Panc1 (cell line): ENCODE measurements at regions of chr9 and their contacts with region 1.

Region 1: DNA sequence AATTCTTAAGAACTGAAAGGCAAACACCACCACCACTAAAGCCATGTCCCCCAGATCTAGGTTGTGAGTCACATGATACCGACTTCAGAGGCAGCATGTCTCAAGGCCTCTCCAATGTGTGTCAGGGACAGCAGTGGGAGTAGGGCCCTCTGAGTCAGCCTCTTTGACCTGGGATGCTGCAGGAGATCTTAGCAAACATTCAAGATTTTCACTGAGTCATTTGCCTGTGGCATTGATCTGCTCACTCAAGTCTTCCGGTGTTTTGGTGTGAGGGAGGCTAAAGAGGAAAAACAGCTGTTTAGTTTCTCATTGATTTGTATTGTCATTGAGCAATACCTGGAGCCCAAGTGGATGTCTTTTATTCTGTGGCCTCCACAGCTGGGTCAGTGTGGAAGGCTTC is 36.1 kb downstream of the TMC1 start:
- DNase-seq: peak; percentile 85
- ATAC-seq: peak; percentile 98
- H3K4me3 ChIP-seq: no peak overlapping the region
- H3K27ac ChIP-seq: peak overlapping the region; percentile 94
- H3K4me1 ChIP-seq: peaks cover 32% of the 10 kb centered on the region
- H3K27me3 ChIP-seq: no peaks in the 10 kb centered on the region
- CTCF ChIP-seq: no peak

Region 2: DNA sequence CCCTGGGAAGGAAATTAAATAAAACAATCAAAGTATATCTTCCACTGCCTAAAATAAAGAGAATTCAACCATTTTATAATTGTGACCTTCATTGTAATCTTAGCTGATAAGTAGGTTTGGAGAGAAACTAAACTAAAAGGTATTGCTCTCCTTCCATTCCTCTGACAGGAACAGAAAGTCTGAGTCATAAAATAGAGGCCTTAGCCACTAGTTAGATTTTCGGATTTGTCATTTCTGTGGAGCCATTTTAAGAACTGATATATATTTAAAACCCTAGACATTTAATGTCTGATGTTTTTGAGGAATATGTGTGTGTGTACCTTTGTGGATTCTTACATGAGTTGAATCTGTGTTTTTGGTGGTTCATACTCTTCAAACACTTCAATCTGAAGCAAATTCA is 47.9 kb before region 1 on chr9:
- CTCF ChIA-PET with region 1: no interaction called
- POLR2A ChIA-PET with region 1: interaction called, 12 read pairs
- in situ Hi-C with region 1: no loop called
- intact Hi-C with region 1: no loop called
- DNase-seq: no peak
- ATAC-seq: no peak
- H3K4me3 ChIP-seq: no peak overlapping the region
- H3K27ac ChIP-seq: peak overlapping the region; percentile 75
- H3K4me1 ChIP-seq: peaks cover 10% of the 10 kb centered on the region; the same call in 1 of the 2 replicates
- H3K27me3 ChIP-seq: no peaks in the 10 kb centered on the region
- CTCF ChIP-seq: no peak